ENCODE measurements at regions of chrX and their contacts with region 1.

Region 1: GRCh38 chrX:18377796-18378195 is 23.3 kb upstream of the SCML2 start:
- DNase-seq: peak; percentile 70
- H3K4me3 Mint-ChIP-seq: no peak overlapping the region
- H3K27ac Mint-ChIP-seq: no peak overlapping the region
- H3K4me1 Mint-ChIP-seq: no peaks in the 10 kb centered on the region
- H3K27me3 Mint-ChIP-seq: peaks cover 1% of the 10 kb centered on the region

Region 2: GRCh38 chrX:17744896-17745523 is 632.8 kb before region 1 on chrX:
- intact Hi-C with region 1: loop called (anchors 5 kb)
- DNase-seq: no peak
- H3K4me3 Mint-ChIP-seq: no peak overlapping the region
- H3K27ac Mint-ChIP-seq: no peak overlapping the region
- H3K4me1 Mint-ChIP-seq: no peaks in the 10 kb centered on the region
- H3K27me3 Mint-ChIP-seq: peaks cover 23% of the 10 kb centered on the region

Region 3: GRCh38 chrX:17788439-17788838 is 589.4 kb before region 1 on chrX:
- intact Hi-C with region 1: loop called (anchors 5 kb)
- DNase-seq: peak; percentile 75
- H3K4me3 Mint-ChIP-seq: no peak overlapping the region
- H3K27ac Mint-ChIP-seq: no peak overlapping the region
- H3K4me1 Mint-ChIP-seq: peaks cover 2% of the 10 kb centered on the region
- H3K27me3 Mint-ChIP-seq: peaks cover 5% of the 10 kb centered on the region

Region 4: DNA sequence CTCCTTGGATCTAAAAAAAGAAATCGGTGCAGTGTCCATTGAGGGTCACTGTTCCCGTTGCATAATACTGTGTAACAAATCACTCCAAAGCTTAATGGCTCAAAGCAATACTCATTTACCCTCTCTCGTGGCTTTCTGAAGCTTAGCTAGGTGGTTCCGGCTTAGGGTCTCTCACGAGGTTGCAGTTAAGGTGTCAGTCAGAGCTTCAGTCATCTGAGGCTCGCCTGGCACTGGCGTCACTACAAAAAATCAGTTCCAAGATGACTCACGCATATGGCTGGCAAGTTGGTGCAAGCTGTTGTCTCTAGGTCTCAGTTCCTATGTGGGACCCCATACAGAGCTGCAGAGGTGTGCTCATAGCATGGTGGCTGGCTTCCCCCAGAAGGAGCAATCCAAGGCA is 248.1 kb before region 1 on chrX:
- intact Hi-C with region 1: no loop called
- DNase-seq: no peak
- H3K4me3 Mint-ChIP-seq: no peak overlapping the region
- H3K27ac Mint-ChIP-seq: no peak overlapping the region
- H3K4me1 Mint-ChIP-seq: no peaks in the 10 kb centered on the region
- H3K27me3 Mint-ChIP-seq: no peaks in the 10 kb centered on the region

Region 5: GRCh38 chrX:18422325-18422724 is 44.5 kb after region 1 on chrX:
- intact Hi-C with region 1: no loop called
- DNase-seq: no peak
- H3K4me3 Mint-ChIP-seq: no peak overlapping the region
- H3K27ac Mint-ChIP-seq: no peak overlapping the region
- H3K4me1 Mint-ChIP-seq: peaks cover 9% of the 10 kb centered on the region
- H3K27me3 Mint-ChIP-seq: peaks cover 16% of the 10 kb centered on the region